ENCODE measurements at regions of chr2 and their contacts with region 1.

Region 1: GRCh38 chr2:136378712-136379595 is 261.0 kb upstream of the CXCR4 start:
- DNase-seq: peak; percentile 88
- H3K4me3 Mint-ChIP-seq: no peak overlapping the region
- H3K27ac Mint-ChIP-seq: peak overlapping the region; percentile 44
- H3K4me1 Mint-ChIP-seq: peaks cover 87% of the 10 kb centered on the region
- H3K27me3 Mint-ChIP-seq: no peaks in the 10 kb centered on the region

Region 2: GRCh38 chr2:135913727-135914365 is 465.1 kb before region 1 on chr2:
- CTCF ChIA-PET with region 1: interaction called, 69 read pairs
- POLR2A ChIA-PET with region 1: interaction called, 4 read pairs
- intact Hi-C with region 1: loop called (anchors 1 kb)
- DNase-seq: no peak
- H3K4me3 Mint-ChIP-seq: no peak overlapping the region
- H3K27ac Mint-ChIP-seq: no peak overlapping the region
- H3K4me1 Mint-ChIP-seq: peaks cover 14% of the 10 kb centered on the region
- H3K27me3 Mint-ChIP-seq: no peaks in the 10 kb centered on the region

Region 3: DNA sequence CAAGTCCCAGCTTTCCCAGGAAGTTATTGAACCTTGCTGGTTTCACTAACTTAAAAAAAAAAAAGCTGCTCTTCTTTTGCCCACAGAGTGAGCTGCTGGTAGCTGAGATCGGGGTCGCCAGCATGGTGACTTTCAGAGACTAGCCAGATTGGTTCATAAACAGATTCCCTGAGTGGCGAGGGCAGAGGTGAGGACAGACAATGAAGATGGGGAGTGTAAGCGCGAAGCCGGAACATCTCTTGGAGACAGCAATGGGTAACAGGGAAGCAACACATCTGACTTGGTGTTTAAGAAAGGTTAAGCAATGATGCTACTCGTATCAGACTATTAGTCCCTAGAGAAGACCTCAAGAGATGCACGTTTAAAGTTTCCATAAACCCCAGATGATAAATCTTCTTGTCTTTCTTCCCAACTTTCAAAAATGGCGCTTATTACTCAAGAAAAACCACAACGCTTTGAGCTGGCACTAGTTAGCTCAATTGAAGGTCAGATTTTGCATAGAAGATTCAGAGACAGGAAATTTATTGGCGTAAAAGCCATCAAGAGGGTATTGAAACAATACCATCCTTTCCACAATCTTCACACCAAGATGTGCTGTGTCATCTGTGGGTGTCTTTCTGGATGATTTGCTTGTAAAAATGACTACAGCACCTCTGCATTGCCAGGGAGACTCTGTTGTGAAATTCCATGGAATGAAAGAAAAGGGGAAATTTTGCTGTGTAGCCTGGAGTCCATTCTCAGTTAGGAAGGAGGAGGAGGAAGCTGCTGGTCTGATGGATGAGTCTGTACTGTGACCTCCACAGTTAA is 68.0 kb before region 1 on chr2:
- CTCF ChIA-PET with region 1: interaction called, 4 read pairs
- POLR2A ChIA-PET with region 1: interaction called, 23 read pairs
- intact Hi-C with region 1: loop called (anchors 1 kb)
- DNase-seq: peak; percentile 51
- H3K4me3 Mint-ChIP-seq: no peak overlapping the region
- H3K27ac Mint-ChIP-seq: peak overlapping the region; percentile 92
- H3K4me1 Mint-ChIP-seq: peaks cover 34% of the 10 kb centered on the region
- H3K27me3 Mint-ChIP-seq: no peaks in the 10 kb centered on the region

Region 4: DNA sequence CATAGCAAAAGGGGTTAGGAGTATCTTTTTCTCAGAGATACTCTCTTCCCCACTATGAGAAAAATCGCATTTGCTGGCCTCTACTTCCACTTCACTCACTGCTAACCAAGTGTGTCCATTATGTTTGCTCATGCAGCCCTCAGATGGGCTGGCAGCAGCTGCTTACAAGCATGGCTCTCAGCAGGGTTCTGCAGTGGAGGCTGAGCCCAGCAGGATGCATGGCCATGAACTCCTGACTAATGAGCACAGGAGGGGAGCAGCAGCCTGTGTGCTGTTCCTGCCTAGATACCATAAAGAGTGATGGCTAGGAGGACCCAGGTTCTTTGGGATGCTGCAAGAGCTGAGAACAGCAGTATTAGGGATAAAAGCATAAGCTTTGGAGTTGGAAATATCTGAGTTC is 69.5 kb after region 1 on chr2:
- CTCF ChIA-PET with region 1: no interaction called
- POLR2A ChIA-PET with region 1: no interaction called
- intact Hi-C with region 1: no loop called
- DNase-seq: no peak
- H3K4me3 Mint-ChIP-seq: no peak overlapping the region
- H3K27ac Mint-ChIP-seq: no peak overlapping the region
- H3K4me1 Mint-ChIP-seq: no peaks in the 10 kb centered on the region
- H3K27me3 Mint-ChIP-seq: peaks cover 7% of the 10 kb centered on the region

Region 5: DNA sequence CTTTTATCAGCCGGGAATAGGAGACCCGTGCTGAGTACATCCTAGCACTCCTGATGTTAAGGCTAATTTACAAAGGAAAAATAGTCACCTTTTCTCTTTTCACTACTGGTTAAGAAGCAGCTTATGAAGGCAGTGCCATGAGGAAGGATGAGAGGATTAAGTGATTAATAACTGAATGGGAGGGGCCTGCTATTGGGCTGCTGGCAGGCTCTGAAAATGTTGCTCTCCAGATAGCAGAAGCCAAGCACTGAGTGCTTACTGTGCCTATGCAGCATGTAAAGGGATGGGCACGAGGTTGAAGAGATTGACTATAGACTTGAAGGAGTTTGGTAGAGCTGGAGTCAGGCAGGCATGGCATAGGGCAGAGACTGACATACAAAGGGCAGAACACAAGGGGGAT is 104.0 kb after region 1 on chr2:
- CTCF ChIA-PET with region 1: no interaction called
- POLR2A ChIA-PET with region 1: no interaction called
- intact Hi-C with region 1: no loop called
- DNase-seq: no peak
- H3K4me3 Mint-ChIP-seq: no peak overlapping the region
- H3K27ac Mint-ChIP-seq: no peak overlapping the region
- H3K4me1 Mint-ChIP-seq: no peaks in the 10 kb centered on the region
- H3K27me3 Mint-ChIP-seq: no peaks in the 10 kb centered on the region

Measured in activated CD4-positive, alpha-beta memory T cell treated with anti-CD3 and anti-CD28 coated beads for 36 hours (primary cell).